GM12878 (cell line): ENCODE measurements at regions of chr14 and their contacts with region 1.

Region 1: GRCh38 chr14:68248481-68249255 is 429.1 kb downstream of the RAD51B start:
- DNase-seq: peak; percentile 89
- ATAC-seq: peak; percentile 84
- H3K4me3 ChIP-seq: no peak overlapping the region
- H3K27ac ChIP-seq: peak overlapping the region; percentile 60
- H3K4me1 ChIP-seq: peaks cover 41% of the 10 kb centered on the region
- H3K27me3 ChIP-seq: no peaks in the 10 kb centered on the region
- CTCF ChIP-seq: peak; percentile 33 to 73 (median 45); a peak in 4 of 6 replicates
- EP300 ChIP-seq: no peak
- POLR2A ChIP-seq: no peak
- RAD21 ChIP-seq: peak; percentile 93

Region 2: GRCh38 chr14:68210729-68211299 is 37.9 kb before region 1 on chr14:
- CTCF ChIA-PET with region 1: interaction called, 4 read pairs
- POLR2A ChIA-PET with region 1: no interaction called
- RAD21 ChIA-PET with region 1: interaction called, 9 read pairs
- SMC1A ChIA-PET with region 1: interaction called, 13 read pairs
- in situ Hi-C with region 1: no loop called
- intact Hi-C with region 1: loop called (anchors 2 kb)
- DNase-seq: peak; percentile 100
- ATAC-seq: peak; percentile 93
- H3K4me3 ChIP-seq: peak overlapping the region; percentile 22; the same call in 1 of the 2 replicates
- H3K27ac ChIP-seq: peak overlapping the region; percentile 86
- H3K4me1 ChIP-seq: peaks cover 58% of the 10 kb centered on the region
- H3K27me3 ChIP-seq: no peaks in the 10 kb centered on the region
- CTCF ChIP-seq: no peak
- EP300 ChIP-seq: peak; percentile 68 to 81
- POLR2A ChIP-seq: no peak
- RAD21 ChIP-seq: 0 out of 2 replicates have a peak, but pooled peaks have one; percentile 17

Region 3: GRCh38 chr14:68283378-68284123 is 34.9 kb after region 1 on chr14:
- CTCF ChIA-PET with region 1: interaction called, 28 read pairs
- POLR2A ChIA-PET with region 1: interaction called, 8 read pairs
- RAD21 ChIA-PET with region 1: interaction called, 240 read pairs
- SMC1A ChIA-PET with region 1: interaction called, 121 read pairs
- in situ Hi-C with region 1: no loop called
- intact Hi-C with region 1: loop called (anchors 1 kb)
- DNase-seq: peak; percentile 95
- ATAC-seq: peak; percentile 57
- H3K4me3 ChIP-seq: no peak overlapping the region
- H3K27ac ChIP-seq: peak overlapping the region; percentile 92
- H3K4me1 ChIP-seq: peaks cover 89% of the 10 kb centered on the region
- H3K27me3 ChIP-seq: no peaks in the 10 kb centered on the region
- CTCF ChIP-seq: no peak
- EP300 ChIP-seq: peak; percentile 68 to 84
- POLR2A ChIP-seq: peak; percentile 78
- RAD21 ChIP-seq: peak; percentile 20; the same call in 1 of the 2 replicates

Region 4: DNA sequence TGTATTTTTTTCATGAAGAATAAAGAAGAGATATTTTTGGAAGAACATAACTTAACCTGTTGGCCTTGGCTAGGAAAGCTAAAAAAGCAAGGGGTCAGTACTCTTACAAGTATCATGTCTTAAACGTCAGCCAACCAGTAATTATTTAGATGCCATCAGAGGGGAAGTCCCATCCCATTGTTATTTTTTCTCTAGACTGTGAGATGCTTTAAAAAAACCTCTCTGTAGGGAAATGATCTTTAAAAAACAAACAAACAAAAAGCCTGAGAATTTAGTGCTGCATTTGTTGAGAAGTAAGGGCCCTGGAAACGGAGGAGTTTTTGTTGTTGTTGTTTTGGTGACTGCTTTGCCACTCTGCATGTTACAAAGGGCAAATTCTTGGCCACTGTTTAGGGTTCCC is 70.2 kb after region 1 on chr14:
- CTCF ChIA-PET with region 1: interaction called, 6 read pairs
- POLR2A ChIA-PET with region 1: interaction called, 3 read pairs
- RAD21 ChIA-PET with region 1: interaction called, 28 read pairs
- SMC1A ChIA-PET with region 1: interaction called, 67 read pairs
- in situ Hi-C with region 1: no loop called
- intact Hi-C with region 1: no loop called
- DNase-seq: no peak
- ATAC-seq: peak; percentile 49
- H3K4me3 ChIP-seq: no peak overlapping the region
- H3K27ac ChIP-seq: no peak overlapping the region
- H3K4me1 ChIP-seq: peaks cover 54% of the 10 kb centered on the region
- H3K27me3 ChIP-seq: no peaks in the 10 kb centered on the region
- CTCF ChIP-seq: no peak; a peak in 1 of 6 replicates
- EP300 ChIP-seq: peak in 1 of 2 experiments; percentile 23; a peak in 1 of 4 replicates
- POLR2A ChIP-seq: no peak
- RAD21 ChIP-seq: no peak

Region 5: DNA sequence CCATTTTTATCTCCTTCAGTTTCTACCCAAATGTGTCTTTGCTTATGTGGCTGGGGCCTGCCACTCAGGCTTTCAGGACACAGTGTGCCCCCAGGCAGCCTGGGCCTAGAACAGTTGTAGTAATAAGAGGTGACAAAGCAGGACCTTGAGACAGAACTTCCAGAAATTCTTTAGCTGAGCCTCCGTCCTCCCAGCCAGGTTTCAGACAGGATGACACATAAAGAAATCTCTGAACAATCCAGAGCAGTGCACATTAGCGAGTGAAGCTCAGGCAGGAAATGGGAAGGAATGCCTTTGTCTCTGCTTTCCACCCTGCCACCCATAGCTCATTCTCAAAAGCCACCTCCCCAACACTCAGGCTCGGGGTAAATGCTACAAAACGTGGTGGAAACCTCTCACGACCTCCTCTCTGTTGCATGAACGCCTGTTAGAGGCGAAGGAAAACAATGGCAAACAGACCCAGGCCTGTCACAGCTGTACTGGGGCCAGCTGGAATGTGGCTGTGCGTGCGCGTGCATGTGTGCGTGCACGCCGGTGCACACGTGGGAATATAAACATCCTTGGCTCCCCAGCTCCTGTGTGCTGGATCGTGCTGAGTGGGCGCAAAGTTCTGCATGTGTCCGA is 257.5 kb after region 1 on chr14:
- CTCF ChIA-PET with region 1: interaction called, 4 read pairs
- POLR2A ChIA-PET with region 1: no interaction called
- RAD21 ChIA-PET with region 1: interaction called, 20 read pairs
- SMC1A ChIA-PET with region 1: interaction called, 28 read pairs
- in situ Hi-C with region 1: no loop called
- intact Hi-C with region 1: loop called (anchors 2 kb)
- DNase-seq: no peak
- ATAC-seq: peak; percentile 32
- H3K4me3 ChIP-seq: peak overlapping the region; percentile 21
- H3K27ac ChIP-seq: peak overlapping the region; percentile 76
- H3K4me1 ChIP-seq: peaks cover 31% of the 10 kb centered on the region
- H3K27me3 ChIP-seq: no peaks in the 10 kb centered on the region
- CTCF ChIP-seq: no peak
- EP300 ChIP-seq: no peak
- POLR2A ChIP-seq: no peak
- RAD21 ChIP-seq: no peak

Region 6: DNA sequence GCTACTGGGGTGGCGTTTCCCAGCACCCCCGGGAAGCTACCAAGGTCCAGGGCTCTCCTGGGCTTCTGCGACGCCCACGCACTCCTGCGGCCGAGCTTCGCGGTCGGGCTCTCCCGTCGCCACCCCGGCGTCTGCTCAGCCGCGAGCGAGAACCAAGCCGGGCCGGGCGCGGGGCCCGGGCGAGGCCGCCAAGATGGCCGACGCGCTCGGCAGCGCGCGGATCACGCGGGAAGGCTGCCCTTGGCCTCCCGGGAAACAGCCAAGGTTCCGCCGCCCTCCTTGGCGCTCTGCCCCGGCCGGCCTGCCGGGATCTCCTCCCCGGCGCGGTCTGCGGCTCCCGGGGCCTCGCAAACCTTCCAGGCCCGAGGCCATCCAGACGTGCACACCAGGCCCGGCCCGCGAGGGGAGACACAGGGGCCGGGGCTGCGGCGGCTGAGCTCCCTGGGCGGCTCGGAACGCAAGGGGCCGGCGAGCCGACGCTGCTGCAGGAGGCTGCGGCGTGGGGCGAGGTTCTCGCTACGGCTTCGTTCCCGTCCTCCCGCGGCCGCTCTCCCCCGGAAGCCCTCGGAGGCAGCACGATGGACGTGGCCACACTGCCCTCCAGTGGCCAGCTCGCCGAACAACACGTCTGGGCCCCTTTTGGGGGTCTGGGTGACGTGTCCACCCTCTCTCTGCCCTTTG is 567.7 kb after region 1 on chr14:
- CTCF ChIA-PET with region 1: interaction called, 310 read pairs
- POLR2A ChIA-PET with region 1: interaction called, 23 read pairs
- RAD21 ChIA-PET with region 1: interaction called, 292 read pairs
- SMC1A ChIA-PET with region 1: interaction called, 314 read pairs
- in situ Hi-C with region 1: no loop called
- intact Hi-C with region 1: loop called (anchors 1 kb)
- DNase-seq: no peak
- ATAC-seq: peak; percentile 64
- H3K4me3 ChIP-seq: peak overlapping the region; percentile 58
- H3K27ac ChIP-seq: peak overlapping the region; percentile 95
- H3K4me1 ChIP-seq: peaks cover 58% of the 10 kb centered on the region
- H3K27me3 ChIP-seq: no peaks in the 10 kb centered on the region
- CTCF ChIP-seq: peak; percentile 89 to 99 (median 92); a peak in 5 of 6 replicates
- EP300 ChIP-seq: 0 out of 4 replicates have a peak, but pooled peaks of 1 of the 2 experiments have one; percentile 12
- POLR2A ChIP-seq: peak; percentile 80
- RAD21 ChIP-seq: peak; percentile 92